ENCODE measurements at regions of chr3 and their contacts with region 1.

Region 1: DNA sequence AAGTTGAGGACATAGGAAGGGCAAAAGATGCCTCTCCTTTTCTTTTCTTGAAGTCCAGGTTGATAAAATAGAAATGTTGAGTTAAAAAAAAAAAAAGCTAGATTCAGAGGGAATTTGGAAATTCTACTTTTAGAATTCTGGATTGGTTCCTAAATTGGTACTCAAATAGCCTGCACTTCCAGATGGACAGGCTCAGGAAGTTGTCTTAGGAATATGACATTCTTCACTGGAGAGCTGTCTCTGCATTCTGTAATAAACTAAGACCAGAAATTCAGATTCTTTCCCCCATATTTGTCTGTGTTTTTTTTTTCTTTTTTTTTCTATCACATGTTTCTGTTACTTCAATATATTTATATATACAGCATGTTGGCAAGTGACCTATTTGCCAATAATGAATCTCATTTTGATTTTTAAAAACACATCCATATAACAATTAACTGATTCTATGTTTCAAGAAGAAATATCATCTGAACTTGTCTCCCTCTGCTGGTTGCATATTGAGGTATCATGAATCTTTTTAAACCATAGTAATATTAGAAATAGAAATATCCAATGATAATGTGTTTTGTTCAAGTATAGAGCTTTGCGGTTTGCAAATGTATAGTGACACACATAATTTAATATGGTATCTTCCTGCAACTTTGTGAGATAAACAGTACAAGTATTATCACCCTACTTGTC is 8.5 kb upstream of the LSAMP start:
- DNase-seq: peak; percentile 14
- ATAC-seq: no peak
- H3K4me3 ChIP-seq: no peak overlapping the region
- H3K27ac ChIP-seq: no peak overlapping the region
- H3K4me1 ChIP-seq: no peaks in the 10 kb centered on the region
- H3K27me3 ChIP-seq: no peaks in the 10 kb centered on the region
- CTCF ChIP-seq: peak; percentile 51

Region 2: DNA sequence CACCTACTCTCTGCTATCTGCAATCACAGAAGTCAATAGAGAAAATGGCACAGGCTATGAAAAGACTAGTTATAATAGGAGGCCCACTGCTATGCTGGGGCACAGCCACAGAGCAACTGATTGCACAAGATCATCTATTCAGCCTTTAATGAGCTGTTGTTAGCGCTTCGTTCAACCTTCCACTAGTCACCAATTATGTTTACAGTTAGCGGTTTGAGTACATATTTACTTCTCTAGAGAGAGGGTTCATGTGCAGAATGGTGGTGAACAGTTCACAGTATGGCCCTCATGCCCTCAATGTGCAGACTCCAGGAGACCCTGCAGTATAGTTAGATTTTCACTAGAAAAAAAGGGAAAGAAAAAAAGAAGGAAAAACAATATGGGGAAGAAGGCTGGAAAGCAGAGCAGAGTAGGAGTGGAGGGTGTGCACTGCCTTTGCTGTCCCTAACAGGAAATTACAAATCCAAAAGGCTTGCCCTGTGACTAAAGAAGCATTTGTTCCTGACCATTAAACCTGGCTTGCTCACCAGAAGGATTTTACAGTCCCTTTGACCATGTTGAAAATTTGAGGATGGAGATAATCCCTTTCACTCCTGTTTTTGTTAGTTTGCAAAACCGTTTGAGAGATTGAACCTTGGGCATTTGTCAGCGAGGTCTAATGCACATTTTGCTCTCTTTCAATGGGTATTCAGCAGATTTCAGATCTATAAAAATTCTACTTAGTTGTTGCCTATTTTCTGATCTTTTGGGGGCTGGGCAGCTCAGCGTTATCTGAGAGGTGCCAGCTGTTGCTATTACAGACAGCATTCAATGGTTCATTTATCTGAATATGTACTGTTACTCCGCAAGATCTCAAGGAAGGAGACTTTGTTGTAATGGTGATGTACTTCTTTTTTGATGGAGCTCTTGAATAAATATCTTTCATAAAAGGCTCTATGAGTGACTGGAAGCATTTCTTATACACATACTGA is 304.6 kb before region 1 on chr3:
- CTCF ChIA-PET with region 1: no interaction called
- POLR2A ChIA-PET with region 1: no interaction called
- intact Hi-C with region 1: loop called (anchors 5 kb)
- DNase-seq: peak; percentile 29
- ATAC-seq: peak; percentile 67
- H3K4me3 ChIP-seq: no peak overlapping the region
- H3K27ac ChIP-seq: no peak overlapping the region
- H3K4me1 ChIP-seq: no peaks in the 10 kb centered on the region
- H3K27me3 ChIP-seq: no peaks in the 10 kb centered on the region
- CTCF ChIP-seq: no peak